ENCODE measurements at regions of chr15 and their contacts with region 1.

Region 1: GRCh38 chr15:39782441-39783138 is at the start of gene FSIP1:
- DNase-seq: peak; percentile 97
- ATAC-seq: peak; percentile 88
- H3K4me3 ChIP-seq: peak within 1 kb of the TSS; percentile 97
- H3K27ac ChIP-seq: peak within 1 kb of the TSS; percentile 73
- H3K4me1 ChIP-seq: peaks cover 49% of the 10 kb centered on the region
- H3K27me3 ChIP-seq: no peaks in the 10 kb centered on the region
- CTCF ChIP-seq: no peak
- total RNA-seq, gene FSIP1: 0.07 and 0.81 TPM in 2 replicates

Region 2: DNA sequence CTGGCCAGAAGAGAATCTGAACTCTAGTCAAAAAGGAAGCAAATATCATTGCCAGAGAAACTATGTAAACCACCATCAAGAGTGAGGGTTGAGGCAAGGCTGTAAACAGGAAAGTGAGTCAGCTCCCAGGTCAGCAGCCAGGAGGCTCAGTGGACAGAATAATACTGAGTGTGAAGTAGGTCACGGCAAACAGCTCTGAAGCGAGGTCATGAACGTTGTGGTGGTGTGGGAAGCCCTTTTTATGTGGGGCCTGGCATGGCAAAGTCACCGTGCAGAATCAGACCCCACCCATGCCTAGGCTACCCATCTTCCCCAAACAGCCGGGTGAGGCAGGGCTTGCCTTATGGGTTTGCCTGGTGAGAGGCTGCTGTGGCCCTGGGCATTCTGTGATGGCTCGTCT is 157.8 kb before region 1 on chr15:
- CTCF ChIA-PET with region 1: no interaction called
- POLR2A ChIA-PET with region 1: no interaction called
- intact Hi-C with region 1: no loop called
- DNase-seq: peak; percentile 88
- ATAC-seq: peak; percentile 84
- H3K4me3 ChIP-seq: no peak overlapping the region
- H3K27ac ChIP-seq: peak overlapping the region; percentile 60
- H3K4me1 ChIP-seq: peaks cover 54% of the 10 kb centered on the region
- H3K27me3 ChIP-seq: no peaks in the 10 kb centered on the region
- CTCF ChIP-seq: no peak

Region 3: DNA sequence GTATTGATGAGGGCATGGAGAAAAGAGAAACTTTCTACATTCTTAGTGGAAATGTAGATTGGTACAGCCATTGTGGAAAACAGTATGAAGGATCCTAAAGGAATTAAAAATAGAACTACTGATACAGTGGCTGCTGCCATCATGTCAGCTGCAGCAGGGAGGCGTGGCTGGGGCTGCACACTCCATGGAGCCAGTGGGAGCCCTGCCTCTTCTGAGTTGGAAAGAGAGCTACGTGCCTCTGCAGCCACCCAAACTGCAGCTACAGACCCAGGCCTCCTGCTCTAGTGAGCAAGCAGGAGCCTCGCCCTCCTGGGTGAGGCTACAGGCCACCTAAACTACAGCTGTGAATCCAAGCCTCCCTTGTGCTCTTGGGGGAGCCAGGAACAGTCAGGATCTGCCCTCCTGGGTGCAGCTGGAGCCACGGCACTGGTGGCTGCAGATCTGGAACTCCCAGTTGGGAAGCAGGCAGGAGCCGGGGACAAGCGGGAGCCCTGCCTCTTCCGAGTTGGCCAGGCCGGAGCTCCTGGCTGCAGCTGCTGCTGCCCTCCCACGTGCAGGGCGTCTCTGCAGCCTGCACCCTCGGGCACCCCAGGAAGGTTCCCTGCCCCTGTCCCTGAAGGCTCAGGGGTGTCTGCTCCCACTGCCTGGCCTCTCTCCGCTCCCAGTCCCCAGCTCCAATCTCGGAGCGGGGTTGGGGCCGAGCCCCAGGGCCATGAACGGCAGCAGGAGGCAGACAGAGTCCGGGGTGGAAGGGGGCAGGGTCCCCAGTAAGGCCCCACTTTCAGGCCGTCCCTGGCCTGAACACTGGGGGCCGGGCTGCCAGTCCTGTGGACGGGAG is 137.2 kb before region 1 on chr15:
- CTCF ChIA-PET with region 1: no interaction called
- POLR2A ChIA-PET with region 1: no interaction called
- intact Hi-C with region 1: no loop called
- DNase-seq: no peak
- ATAC-seq: no peak
- H3K4me3 ChIP-seq: no peak overlapping the region
- H3K27ac ChIP-seq: no peak overlapping the region
- H3K4me1 ChIP-seq: peaks cover 27% of the 10 kb centered on the region
- H3K27me3 ChIP-seq: no peaks in the 10 kb centered on the region
- CTCF ChIP-seq: no peak

Region 4: DNA sequence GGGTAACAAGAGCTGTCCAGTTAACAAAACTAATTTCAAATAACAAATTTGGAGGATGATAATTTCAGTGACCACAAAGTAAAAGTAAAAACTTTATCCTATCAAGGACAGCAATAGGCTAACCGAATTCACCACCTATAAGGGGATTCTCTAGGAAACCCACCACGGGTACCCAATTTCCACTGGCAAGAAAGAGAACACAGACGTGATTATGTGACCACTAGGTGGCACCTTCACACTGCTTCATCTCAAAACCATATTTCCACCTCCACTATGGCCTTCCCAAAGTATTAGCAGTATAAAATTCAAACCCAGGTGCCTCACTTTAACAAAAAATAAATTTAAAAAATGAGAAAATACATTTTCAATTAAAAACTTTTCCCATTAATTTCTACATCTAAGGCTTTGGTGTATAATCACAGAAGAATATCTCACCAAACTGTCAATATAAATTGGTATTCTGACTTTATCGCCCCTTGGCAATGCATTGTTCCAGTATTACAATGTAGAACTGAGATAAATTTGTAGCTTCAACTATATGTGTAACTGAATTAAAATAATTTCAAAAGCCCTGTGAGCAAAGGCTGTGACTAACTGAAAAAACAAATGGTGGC is 96.5 kb before region 1 on chr15:
- CTCF ChIA-PET with region 1: no interaction called
- POLR2A ChIA-PET with region 1: no interaction called
- intact Hi-C with region 1: loop called (anchors 1 kb)
- DNase-seq: peak; percentile 70
- ATAC-seq: peak; percentile 80
- H3K4me3 ChIP-seq: no peak overlapping the region
- H3K27ac ChIP-seq: no peak overlapping the region
- H3K4me1 ChIP-seq: no peaks in the 10 kb centered on the region
- H3K27me3 ChIP-seq: no peaks in the 10 kb centered on the region
- CTCF ChIP-seq: peak; percentile 92

Region 5: GRCh38 chr15:39704689-39705088 is 77.9 kb before region 1 on chr15:
- CTCF ChIA-PET with region 1: no interaction called
- POLR2A ChIA-PET with region 1: no interaction called
- intact Hi-C with region 1: no loop called
- DNase-seq: no peak
- ATAC-seq: no peak
- H3K4me3 ChIP-seq: no peak overlapping the region
- H3K27ac ChIP-seq: no peak overlapping the region
- H3K4me1 ChIP-seq: no peaks in the 10 kb centered on the region
- H3K27me3 ChIP-seq: no peaks in the 10 kb centered on the region
- CTCF ChIP-seq: no peak

Region 6: DNA sequence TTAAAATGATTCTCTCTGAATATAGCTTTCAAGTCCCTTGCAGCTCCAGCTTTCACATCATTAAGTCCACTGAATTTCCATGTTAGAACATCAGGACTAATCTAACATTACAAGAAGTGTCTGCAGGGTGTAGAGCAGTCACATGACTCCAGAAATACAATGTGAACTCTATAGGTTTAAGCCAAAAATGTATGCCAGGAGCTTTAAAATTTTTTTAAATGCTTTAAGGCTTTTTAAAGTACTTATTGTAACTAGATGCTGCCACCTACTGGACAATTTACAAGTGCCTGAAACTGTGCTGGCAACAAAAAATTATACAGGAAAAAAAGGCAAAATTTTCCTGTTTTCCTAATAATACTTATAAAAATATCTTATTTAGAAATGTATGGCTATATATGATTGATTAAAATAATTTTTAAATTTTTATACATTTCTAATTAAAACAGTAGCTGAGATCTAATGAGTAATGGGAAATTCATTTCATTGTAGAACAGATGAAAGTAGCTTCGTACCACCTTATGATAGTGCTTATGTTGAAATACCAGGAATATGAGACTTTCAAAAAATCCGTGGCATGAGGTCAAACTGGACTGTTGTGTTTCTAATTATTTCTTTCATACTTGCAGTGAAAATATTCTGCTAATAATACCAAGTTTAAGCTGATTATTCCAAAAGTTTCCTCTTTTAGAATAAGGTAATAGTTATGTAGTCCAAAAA is 25.6 kb before region 1 on chr15:
- CTCF ChIA-PET with region 1: no interaction called
- POLR2A ChIA-PET with region 1: no interaction called
- intact Hi-C with region 1: no loop called
- DNase-seq: peak; percentile 79
- ATAC-seq: peak; percentile 46; the same call in 1 of the 2 replicates
- H3K4me3 ChIP-seq: no peak overlapping the region
- H3K27ac ChIP-seq: no peak overlapping the region
- H3K4me1 ChIP-seq: no peaks in the 10 kb centered on the region
- H3K27me3 ChIP-seq: no peaks in the 10 kb centered on the region
- CTCF ChIP-seq: peak; percentile 78

Region 7: GRCh38 chr15:39833515-39833981 is 51.0 kb after region 1 on chr15:
- CTCF ChIA-PET with region 1: interaction called, 3 read pairs
- POLR2A ChIA-PET with region 1: no interaction called
- intact Hi-C with region 1: loop called (anchors 1 kb)
- DNase-seq: peak; percentile 86
- ATAC-seq: peak; percentile 91
- H3K4me3 ChIP-seq: peak overlapping the region; percentile 15; the same call in 1 of the 2 replicates
- H3K27ac ChIP-seq: peak overlapping the region; percentile 79
- H3K4me1 ChIP-seq: peaks cover 29% of the 10 kb centered on the region
- H3K27me3 ChIP-seq: no peaks in the 10 kb centered on the region
- CTCF ChIP-seq: no peak

Region 8: GRCh38 chr15:39874890-39875549 is 92.4 kb after region 1 on chr15:
- CTCF ChIA-PET with region 1: no interaction called
- POLR2A ChIA-PET with region 1: no interaction called
- intact Hi-C with region 1: loop called (anchors 1 kb)
- DNase-seq: peak; percentile 69
- ATAC-seq: peak; percentile 81
- H3K4me3 ChIP-seq: no peak overlapping the region
- H3K27ac ChIP-seq: no peak overlapping the region
- H3K4me1 ChIP-seq: peaks cover 13% of the 10 kb centered on the region; the same call in 1 of the 2 replicates
- H3K27me3 ChIP-seq: no peaks in the 10 kb centered on the region
- CTCF ChIP-seq: peak; percentile 87

Region 9: DNA sequence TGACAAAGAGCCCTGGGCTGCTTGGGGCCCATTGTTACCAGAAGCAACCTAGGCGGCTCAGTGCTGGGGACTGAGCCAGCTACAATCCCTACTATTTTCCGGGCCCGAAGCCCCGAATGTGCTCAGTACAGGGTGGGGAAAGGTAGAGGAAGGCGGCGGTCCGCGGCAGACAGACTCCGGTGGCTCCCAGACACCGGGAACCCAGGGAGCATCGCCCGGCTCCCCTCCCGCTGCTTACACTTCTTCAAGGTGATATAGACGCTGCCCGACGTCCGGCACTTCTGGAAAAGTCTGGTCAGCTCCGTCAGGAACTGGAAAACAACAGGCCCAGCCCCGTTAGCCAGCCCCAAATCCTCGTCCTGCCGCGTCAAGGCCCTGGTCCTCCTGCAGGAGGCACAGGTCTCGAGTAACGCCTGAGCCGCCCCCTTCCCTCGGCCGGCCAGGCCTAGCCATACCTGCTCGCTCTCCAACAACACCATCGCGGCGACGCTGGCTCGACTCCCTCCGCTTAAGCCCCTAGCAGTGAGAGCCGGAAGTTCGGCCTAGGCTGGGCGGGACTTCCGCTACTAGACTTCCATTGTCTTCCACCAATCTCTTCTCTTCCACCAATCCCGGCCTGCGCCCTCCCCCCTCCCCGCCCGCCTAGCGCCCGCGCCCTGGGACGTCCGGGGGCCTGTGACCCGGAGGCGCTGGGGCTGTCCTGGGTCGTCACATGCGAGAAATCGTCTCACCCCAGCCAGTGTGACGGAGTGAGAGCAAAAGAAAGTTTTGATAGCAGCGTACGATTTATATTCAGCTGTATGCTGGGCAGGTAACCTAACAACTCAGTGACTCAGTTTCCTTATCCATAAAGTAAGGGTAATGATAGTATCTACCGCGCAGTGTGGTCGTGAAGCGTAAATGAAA is 256.3 kb after region 1 on chr15 and contains the start of gene SRP14:
- CTCF ChIA-PET with region 1: no interaction called
- POLR2A ChIA-PET with region 1: no interaction called
- intact Hi-C with region 1: loop called (anchors 10 kb)
- DNase-seq: peak; percentile 92
- ATAC-seq: peak; percentile 96
- H3K4me3 ChIP-seq: peak within 1 kb of the TSS; percentile 85
- H3K27ac ChIP-seq: peak within 1 kb of the TSS; percentile 39
- H3K4me1 ChIP-seq: peaks cover 8% of the 10 kb centered on the region
- H3K27me3 ChIP-seq: no peaks in the 10 kb centered on the region
- CTCF ChIP-seq: no peak
- total RNA-seq, gene SRP14: 362 and 378 TPM in 2 replicates

Region 10: DNA sequence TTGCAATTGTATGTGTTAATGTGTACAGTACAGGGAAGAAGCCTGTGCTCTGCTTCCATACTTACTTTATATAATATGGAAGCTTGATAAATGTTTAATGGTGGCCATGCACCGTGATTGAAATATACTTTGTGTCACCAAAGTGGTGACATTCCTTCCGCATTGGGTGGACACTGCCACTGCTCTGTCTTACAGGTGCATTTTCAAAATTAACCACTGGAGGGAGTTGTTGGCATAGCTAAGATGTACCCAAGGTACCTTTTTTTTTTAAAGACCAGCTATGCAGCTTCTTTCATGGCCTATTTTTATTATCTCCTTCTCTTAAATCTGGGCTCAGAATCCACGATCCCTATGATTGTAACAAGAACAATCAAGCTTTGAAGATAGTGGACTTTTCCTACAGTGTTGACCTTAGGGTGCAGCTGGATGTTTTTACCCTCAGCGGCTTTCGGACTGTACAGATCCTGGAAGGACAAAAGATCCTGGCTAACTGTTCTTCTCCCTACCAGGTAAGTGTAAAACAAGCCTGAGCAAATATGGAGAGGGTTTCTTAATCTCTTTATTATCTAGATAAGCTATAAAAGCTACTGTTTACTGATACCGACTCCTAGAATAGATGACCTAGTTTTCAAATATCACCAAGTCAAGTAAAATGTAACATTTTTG is 434.7 kb after region 1 on chr15:
- CTCF ChIA-PET with region 1: no interaction called
- POLR2A ChIA-PET with region 1: no interaction called
- intact Hi-C with region 1: loop called (anchors 1 kb)
- DNase-seq: peak; percentile 92
- ATAC-seq: peak; percentile 85
- H3K4me3 ChIP-seq: no peak overlapping the region
- H3K27ac ChIP-seq: no peak overlapping the region
- H3K4me1 ChIP-seq: no peaks in the 10 kb centered on the region
- H3K27me3 ChIP-seq: no peaks in the 10 kb centered on the region
- CTCF ChIP-seq: peak; percentile 94